ENCODE measurements at regions of chr4 and their contacts with region 1.

Region 1: GRCh38 chr4:156378033-156378665 is 424.5 kb upstream of the CTSO start:
- DNase-seq: peak; percentile 53
- H3K4me3 ChIP-seq: no peak overlapping the region
- H3K27ac ChIP-seq: no peak overlapping the region
- H3K4me1 ChIP-seq: peaks cover 3% of the 10 kb centered on the region
- H3K27me3 ChIP-seq: no peaks in the 10 kb centered on the region
- CTCF ChIP-seq: peak; percentile 54 to 63

Region 2: DNA sequence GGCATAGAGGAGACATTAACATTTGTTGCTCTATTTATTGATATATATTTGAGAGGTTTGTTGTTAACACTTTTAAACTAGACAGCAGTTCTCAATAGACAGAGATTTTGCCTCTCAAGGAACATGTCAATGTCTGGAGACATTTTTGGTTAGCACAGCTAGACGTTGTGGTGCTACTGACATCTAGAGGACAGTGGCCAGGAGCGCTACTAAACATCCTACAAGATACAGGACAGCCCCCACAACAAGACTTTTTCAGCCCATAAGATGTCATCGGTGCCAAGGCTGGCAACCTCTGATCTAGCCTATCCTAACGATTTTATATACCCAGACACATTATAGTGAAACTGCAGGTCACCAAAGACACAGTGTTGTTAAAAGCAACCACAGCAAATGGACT is 406.1 kb before region 1 on chr4:
- CTCF ChIA-PET with region 1: no interaction called
- dilution Hi-C with region 1: no loop called
- in situ Hi-C with region 1: no loop called
- intact Hi-C with region 1: loop called (anchors 10 kb)
- DNase-seq: no peak
- H3K4me3 ChIP-seq: no peak overlapping the region
- H3K27ac ChIP-seq: no peak overlapping the region
- H3K4me1 ChIP-seq: no peaks in the 10 kb centered on the region
- H3K27me3 ChIP-seq: no peaks in the 10 kb centered on the region
- CTCF ChIP-seq: peak; percentile 14 to 36

Region 3: GRCh38 chr4:156109949-156110900 is 267.9 kb before region 1 on chr4:
- CTCF ChIA-PET with region 1: interaction called, 4 read pairs
- dilution Hi-C with region 1: no loop called
- in situ Hi-C with region 1: no loop called
- intact Hi-C with region 1: loop called (anchors 2 kb)
- DNase-seq: peak; percentile 83
- H3K4me3 ChIP-seq: no peak overlapping the region
- H3K27ac ChIP-seq: peak overlapping the region; percentile 90
- H3K4me1 ChIP-seq: peaks cover 24% of the 10 kb centered on the region
- H3K27me3 ChIP-seq: no peaks in the 10 kb centered on the region
- CTCF ChIP-seq: peak; percentile 48 to 61

Region 4: GRCh38 chr4:156169011-156169410 is 209.1 kb before region 1 on chr4:
- CTCF ChIA-PET with region 1: no interaction called
- dilution Hi-C with region 1: no loop called
- in situ Hi-C with region 1: no loop called
- intact Hi-C with region 1: loop called (anchors 2 kb)
- DNase-seq: peak; percentile 80
- H3K4me3 ChIP-seq: no peak overlapping the region
- H3K27ac ChIP-seq: no peak overlapping the region
- H3K4me1 ChIP-seq: peaks cover 7% of the 10 kb centered on the region
- H3K27me3 ChIP-seq: no peaks in the 10 kb centered on the region
- CTCF ChIP-seq: peak; percentile 63 to 67

Region 5: DNA sequence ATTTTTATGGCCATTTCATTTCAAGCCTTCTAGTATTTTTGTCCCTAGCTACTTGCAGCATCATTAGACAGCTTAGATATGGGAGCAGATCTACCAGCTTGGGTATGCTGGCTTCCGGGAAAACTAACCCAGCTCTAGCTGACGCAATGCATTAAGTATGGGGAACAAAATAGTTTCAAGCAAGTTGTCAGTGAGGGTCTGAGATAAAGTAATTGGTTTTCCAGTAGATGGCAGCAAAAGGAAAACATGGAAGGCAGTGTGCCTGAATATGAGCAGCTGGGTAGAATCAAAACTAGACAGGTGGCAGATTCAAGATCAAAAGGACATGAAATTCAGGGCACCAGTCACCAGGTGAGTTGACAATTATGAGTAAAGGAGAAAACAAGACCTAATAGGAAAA is 83.6 kb before region 1 on chr4:
- CTCF ChIA-PET with region 1: no interaction called
- dilution Hi-C with region 1: no loop called
- in situ Hi-C with region 1: no loop called
- intact Hi-C with region 1: loop called (anchors 2 kb)
- DNase-seq: peak; percentile 69
- H3K4me3 ChIP-seq: no peak overlapping the region
- H3K27ac ChIP-seq: no peak overlapping the region
- H3K4me1 ChIP-seq: peaks cover 8% of the 10 kb centered on the region
- H3K27me3 ChIP-seq: no peaks in the 10 kb centered on the region
- CTCF ChIP-seq: peak; percentile 13 to 38

Region 6: DNA sequence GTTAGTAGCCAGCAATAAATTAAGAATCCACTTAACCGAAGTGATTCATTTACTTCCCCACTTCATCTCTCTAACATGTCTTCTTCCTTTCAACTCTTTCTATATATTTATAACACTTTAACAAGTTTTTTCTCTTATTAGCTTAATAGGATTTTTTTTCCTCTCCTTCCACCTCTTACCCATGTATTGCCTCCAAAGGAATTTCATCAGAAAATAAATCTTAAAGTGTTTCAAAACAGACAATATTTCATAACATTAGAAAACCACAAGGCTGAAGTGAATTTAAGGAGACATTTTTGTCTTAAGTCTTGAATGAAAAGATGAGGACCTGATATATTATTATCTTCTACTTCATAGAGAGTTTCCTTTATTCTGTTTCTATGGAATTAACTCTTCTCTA is 492.0 kb after region 1 on chr4:
- CTCF ChIA-PET with region 1: no interaction called
- dilution Hi-C with region 1: no loop called
- in situ Hi-C with region 1: no loop called
- intact Hi-C with region 1: no loop called
- DNase-seq: no peak
- H3K4me3 ChIP-seq: no peak overlapping the region
- H3K27ac ChIP-seq: no peak overlapping the region
- H3K4me1 ChIP-seq: no peaks in the 10 kb centered on the region
- H3K27me3 ChIP-seq: no peaks in the 10 kb centered on the region
- CTCF ChIP-seq: no peak

Measured in mammary epithelial cell (primary cell).